ENCODE measurements at regions of chr22 and their contacts with region 1.

Region 1: GRCh38 chr22:29259253-29259899 is 8.4 kb downstream of the RHBDD3 start:
- DNase-seq: no peak
- ATAC-seq: peak; percentile 61
- H3K4me3 ChIP-seq: no peak overlapping the region
- H3K27ac ChIP-seq: no peak overlapping the region
- H3K4me1 ChIP-seq: peaks cover 4% of the 10 kb centered on the region
- H3K27me3 ChIP-seq: no peaks in the 10 kb centered on the region
- CTCF ChIP-seq: peak; percentile 12; the same call in 1 of the 2 replicates
- EP300 ChIP-seq: no peak
- POLR2A ChIP-seq: no peak
- RAD21 ChIP-seq: no peak

Region 2: DNA sequence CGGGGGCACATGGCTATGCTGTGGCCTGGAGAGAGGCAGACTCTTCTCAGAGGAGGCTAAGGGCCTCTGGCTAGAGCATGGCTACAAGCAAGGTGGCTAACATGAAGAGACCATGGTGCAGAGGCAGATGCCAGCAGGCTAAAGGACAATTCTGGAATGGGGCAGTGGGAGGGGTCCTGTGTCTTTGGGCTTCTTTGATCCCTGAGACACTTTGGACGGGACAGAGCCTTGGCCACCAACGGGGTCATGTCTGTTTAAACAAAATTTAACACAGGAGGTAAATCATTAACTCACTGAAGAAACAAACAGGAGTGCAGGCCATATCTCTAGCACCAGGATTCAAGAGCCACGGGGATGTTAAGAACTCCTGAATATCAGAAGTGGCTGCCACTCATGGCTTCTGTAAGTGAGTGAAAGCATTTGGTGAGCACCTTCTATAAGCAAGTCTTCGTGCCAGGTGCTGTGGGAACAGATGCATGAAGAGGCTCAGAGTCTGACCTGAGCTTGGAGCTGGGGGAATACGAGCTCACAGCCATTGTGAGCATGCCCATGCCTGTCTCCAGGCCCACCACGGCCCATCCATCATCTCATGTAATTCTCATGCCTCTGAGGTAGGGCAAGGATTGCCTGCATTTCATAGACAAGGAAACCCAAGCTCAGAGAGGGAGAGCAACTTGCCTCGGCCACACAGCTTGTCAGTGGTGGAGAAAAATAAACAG is 394.3 kb before region 1 on chr22:
- CTCF ChIA-PET with region 1: no interaction called
- POLR2A ChIA-PET with region 1: no interaction called
- in situ Hi-C with region 1: loop called (anchors 10 kb)
- intact Hi-C with region 1: no loop called
- DNase-seq: peak; percentile 97
- ATAC-seq: peak; percentile 92
- H3K4me3 ChIP-seq: peak overlapping the region; percentile 42 to 65 (median 42); a peak in 5 of 6 replicates
- H3K27ac ChIP-seq: peak overlapping the region; percentile 84
- H3K4me1 ChIP-seq: peaks cover 64% of the 10 kb centered on the region
- H3K27me3 ChIP-seq: no peaks in the 10 kb centered on the region
- CTCF ChIP-seq: peak; percentile 16; the same call in 1 of the 2 replicates
- EP300 ChIP-seq: peak in 1 of 2 experiments; percentile 95; a peak in 2 of 4 replicates
- POLR2A ChIP-seq: peak; percentile 64 to 87; a peak in 2 of 4 replicates
- RAD21 ChIP-seq: no peak

Region 3: GRCh38 chr22:29369460-29369859 is 110.1 kb after region 1 on chr22:
- CTCF ChIA-PET with region 1: no interaction called
- POLR2A ChIA-PET with region 1: no interaction called
- in situ Hi-C with region 1: no loop called
- intact Hi-C with region 1: no loop called
- DNase-seq: no peak
- ATAC-seq: no peak; the same call in 2 of the 3 replicates
- H3K4me3 ChIP-seq: no peak overlapping the region
- H3K27ac ChIP-seq: no peak overlapping the region
- H3K4me1 ChIP-seq: no peaks in the 10 kb centered on the region
- H3K27me3 ChIP-seq: no peaks in the 10 kb centered on the region
- CTCF ChIP-seq: no peak
- EP300 ChIP-seq: no peak
- POLR2A ChIP-seq: no peak
- RAD21 ChIP-seq: no peak

Measured in HepG2 (cell line).